GM12878 (cell line): ENCODE measurements at regions of chr5 and their contacts with region 1.

Region 1: DNA sequence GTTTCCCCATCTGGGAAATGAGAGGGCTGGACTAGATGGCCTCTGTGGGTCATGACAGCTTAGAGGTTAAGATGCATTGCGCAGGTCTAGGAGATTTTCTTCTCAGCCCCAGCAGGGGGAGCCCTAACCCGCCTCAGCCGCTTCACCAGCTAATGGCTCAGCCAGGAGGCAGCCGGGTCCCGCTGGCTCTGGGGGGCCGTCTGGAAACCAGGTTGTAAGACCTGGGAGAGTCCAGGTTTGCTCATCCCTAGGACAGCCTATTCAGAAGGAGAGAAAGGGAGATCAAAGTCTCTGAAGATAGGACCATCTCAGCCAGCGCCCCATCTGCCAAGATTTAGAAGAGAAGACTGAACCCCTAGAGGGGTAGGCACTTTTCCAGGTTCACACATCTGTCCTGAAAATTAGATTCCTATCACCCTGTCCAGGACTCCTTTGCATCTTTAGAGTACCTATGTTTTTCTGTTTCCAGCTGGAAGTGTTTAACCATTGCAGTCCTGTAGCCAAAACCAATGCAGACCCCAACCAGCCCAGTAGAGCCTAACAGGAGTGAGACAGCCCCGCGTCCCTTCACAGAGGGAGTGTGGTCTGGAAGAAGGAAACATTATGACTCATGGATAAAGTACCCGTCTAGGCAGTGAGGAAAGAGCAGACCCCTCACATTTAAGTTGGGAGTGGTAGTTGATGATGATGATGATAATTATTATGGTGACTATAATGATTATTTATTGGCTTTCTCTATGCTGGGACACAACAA is 27.5 kb downstream of the SPARC start:
- DNase-seq: peak; percentile 39
- ATAC-seq: peak; percentile 83
- H3K4me3 ChIP-seq: no peak overlapping the region
- H3K27ac ChIP-seq: no peak overlapping the region
- H3K4me1 ChIP-seq: peaks cover 35% of the 10 kb centered on the region
- H3K27me3 ChIP-seq: no peaks in the 10 kb centered on the region; a peak in 1 of 4 replicates
- CTCF ChIP-seq: peak; percentile 81 to 98 (median 82)
- EP300 ChIP-seq: no peak
- POLR2A ChIP-seq: no peak
- RAD21 ChIP-seq: peak; percentile 96

Region 2: GRCh38 chr5:151612689-151613427 is 46.3 kb before region 1 on chr5:
- CTCF ChIA-PET with region 1: interaction called, 4 read pairs
- POLR2A ChIA-PET with region 1: no interaction called
- RAD21 ChIA-PET with region 1: no interaction called
- SMC1A ChIA-PET with region 1: interaction called, 10 read pairs
- in situ Hi-C with region 1: no loop called
- intact Hi-C with region 1: no loop called
- DNase-seq: peak; percentile 45
- ATAC-seq: peak; percentile 80
- H3K4me3 ChIP-seq: no peak overlapping the region
- H3K27ac ChIP-seq: peak overlapping the region; percentile 56; the same call in 1 of the 2 replicates
- H3K4me1 ChIP-seq: peaks cover 31% of the 10 kb centered on the region
- H3K27me3 ChIP-seq: no peaks in the 10 kb centered on the region; a peak in 1 of 4 replicates
- CTCF ChIP-seq: no peak
- EP300 ChIP-seq: peak in 1 of 2 experiments; percentile 65; a peak in 3 of 4 replicates
- POLR2A ChIP-seq: no peak
- RAD21 ChIP-seq: no peak

Region 3: GRCh38 chr5:151699071-151699901 is 40.1 kb after region 1 on chr5:
- CTCF ChIA-PET with region 1: interaction called, 16 read pairs
- POLR2A ChIA-PET with region 1: no interaction called
- RAD21 ChIA-PET with region 1: interaction called, 9 read pairs
- SMC1A ChIA-PET with region 1: interaction called, 12 read pairs
- in situ Hi-C with region 1: no loop called
- intact Hi-C with region 1: loop called (anchors 5 kb)
- DNase-seq: no peak
- ATAC-seq: no peak
- H3K4me3 ChIP-seq: no peak overlapping the region
- H3K27ac ChIP-seq: no peak overlapping the region
- H3K4me1 ChIP-seq: peaks cover 42% of the 10 kb centered on the region
- H3K27me3 ChIP-seq: no peaks in the 10 kb centered on the region
- CTCF ChIP-seq: no peak
- EP300 ChIP-seq: no peak
- POLR2A ChIP-seq: no peak
- RAD21 ChIP-seq: no peak

Region 4: DNA sequence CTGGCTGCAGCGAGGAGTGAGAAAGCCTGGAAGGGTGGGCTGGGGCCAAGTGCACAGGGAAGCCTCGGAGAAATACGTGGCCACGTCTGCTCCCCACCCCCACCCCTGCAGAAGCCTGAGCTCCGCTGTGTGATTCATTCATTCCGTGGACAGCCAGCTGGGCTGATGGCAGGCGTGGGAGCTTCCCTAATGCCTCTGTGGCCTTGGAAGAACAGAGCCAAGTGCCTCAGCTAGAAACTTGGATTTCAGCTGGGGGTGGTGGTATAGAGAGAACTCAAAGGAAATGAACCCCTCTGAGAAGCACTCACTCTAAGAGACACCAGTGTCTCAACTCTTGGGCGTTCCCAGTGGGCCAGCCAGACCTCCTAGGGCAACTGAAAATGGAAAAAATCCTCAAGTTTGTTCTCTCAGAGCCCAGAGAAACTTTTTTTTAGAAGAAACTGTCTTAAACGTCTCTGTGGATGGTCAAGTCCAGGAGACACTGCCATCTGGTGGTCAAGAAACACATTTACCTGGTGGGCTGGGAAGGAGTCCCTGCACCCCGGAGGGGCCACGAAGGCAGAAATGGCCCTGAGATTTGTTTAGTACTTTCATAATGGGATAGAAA is 81.3 kb after region 1 on chr5:
- CTCF ChIA-PET with region 1: interaction called, 381 read pairs
- POLR2A ChIA-PET with region 1: interaction called, 19 read pairs
- RAD21 ChIA-PET with region 1: interaction called, 207 read pairs
- SMC1A ChIA-PET with region 1: interaction called, 154 read pairs
- in situ Hi-C with region 1: loop called (anchors 5 kb)
- intact Hi-C with region 1: loop called (anchors 1 kb)
- DNase-seq: no peak
- ATAC-seq: peak; percentile 70
- H3K4me3 ChIP-seq: no peak overlapping the region
- H3K27ac ChIP-seq: peak overlapping the region; percentile 54
- H3K4me1 ChIP-seq: peaks cover 39% of the 10 kb centered on the region
- H3K27me3 ChIP-seq: no peaks in the 10 kb centered on the region
- CTCF ChIP-seq: peak; percentile 76 to 88 (median 81)
- EP300 ChIP-seq: no peak
- POLR2A ChIP-seq: no peak
- RAD21 ChIP-seq: peak; percentile 90

Region 5: GRCh38 chr5:151771259-151772028 is 112.3 kb after region 1 on chr5 and contains the start of gene G3BP1:
- CTCF ChIA-PET with region 1: interaction called, 39 read pairs
- POLR2A ChIA-PET with region 1: interaction called, 11 read pairs
- RAD21 ChIA-PET with region 1: interaction called, 45 read pairs
- SMC1A ChIA-PET with region 1: interaction called, 25 read pairs
- in situ Hi-C with region 1: no loop called
- intact Hi-C with region 1: loop called (anchors 1 kb)
- DNase-seq: peak; percentile 100
- ATAC-seq: peak; percentile 87
- H3K4me3 ChIP-seq: peak within 1 kb of the TSS; percentile 97
- H3K27ac ChIP-seq: peak within 1 kb of the TSS; percentile 98
- H3K4me1 ChIP-seq: peaks cover 10% of the 10 kb centered on the region
- H3K27me3 ChIP-seq: no peaks in the 10 kb centered on the region
- CTCF ChIP-seq: peak; percentile 64 to 99 (median 71); a peak in 4 of 6 replicates
- EP300 ChIP-seq: no peak
- POLR2A ChIP-seq: peak; percentile 18
- RAD21 ChIP-seq: peak; percentile 67
- polyA plus RNA-seq, gene G3BP1: 49.7 to 52.7 TPM